ENCODE measurements at regions of chr7 and their contacts with region 1.

Region 1: DNA sequence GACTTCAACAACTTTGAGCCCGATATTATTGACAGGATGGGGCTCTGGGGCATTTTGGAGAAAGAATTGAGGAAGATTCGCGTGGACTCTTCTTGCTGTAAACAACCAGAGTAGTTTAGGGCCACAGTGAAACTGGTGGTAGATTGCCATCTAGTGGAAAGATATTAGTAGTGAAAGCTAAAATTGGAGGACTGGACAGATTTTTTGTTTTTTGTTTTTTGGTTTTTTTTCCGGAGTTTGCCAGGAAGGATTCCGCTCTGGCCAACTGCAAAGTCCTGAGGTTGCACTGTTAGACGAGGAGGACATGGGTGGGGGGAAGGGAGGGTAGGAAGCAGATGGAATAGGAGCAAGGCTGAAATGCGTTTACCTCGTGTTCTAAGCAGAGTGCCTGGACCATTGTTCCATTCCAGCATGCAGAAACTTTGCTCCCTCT is 11.7 kb downstream of the NOBOX start:
- DNase-seq: peak; percentile 46
- ATAC-seq: peak; percentile 92
- H3K4me3 ChIP-seq: no peak overlapping the region
- H3K27ac ChIP-seq: no peak overlapping the region
- H3K4me1 ChIP-seq: no peaks in the 10 kb centered on the region
- H3K27me3 ChIP-seq: peaks cover 0 to 5% of the 10 kb centered on the region in 2 experiments; a peak in 2 of 5 replicates
- CTCF ChIP-seq: peak; percentile 70
- EP300 ChIP-seq: no peak
- POLR2A ChIP-seq: no peak
- RAD21 ChIP-seq: peak; percentile 34; the same call in 1 of the 2 replicates

Region 2: GRCh38 chr7:143884969-143885559 is 506.8 kb before region 1 on chr7:
- CTCF ChIA-PET with region 1: no interaction called
- POLR2A ChIA-PET with region 1: no interaction called
- in situ Hi-C with region 1: loop called (anchors 25 kb)
- intact Hi-C with region 1: no loop called
- DNase-seq: no peak
- ATAC-seq: no peak
- H3K4me3 ChIP-seq: no peak overlapping the region
- H3K27ac ChIP-seq: no peak overlapping the region
- H3K4me1 ChIP-seq: peaks cover 19% of the 10 kb centered on the region
- H3K27me3 ChIP-seq: no peaks in the 10 kb centered on the region; a peak in 1 of 5 replicates
- CTCF ChIP-seq: no peak
- EP300 ChIP-seq: no peak
- POLR2A ChIP-seq: no peak
- RAD21 ChIP-seq: no peak

Region 3: GRCh38 chr7:144174613-144175012 is 217.2 kb before region 1 on chr7:
- CTCF ChIA-PET with region 1: interaction called, 15 read pairs
- POLR2A ChIA-PET with region 1: no interaction called
- in situ Hi-C with region 1: loop called (anchors 10 kb)
- intact Hi-C with region 1: no loop called
- DNase-seq: no peak
- ATAC-seq: no peak
- H3K4me3 ChIP-seq: no peak overlapping the region
- H3K27ac ChIP-seq: no peak overlapping the region
- H3K4me1 ChIP-seq: no peaks in the 10 kb centered on the region
- H3K27me3 ChIP-seq: no peaks in the 10 kb centered on the region
- CTCF ChIP-seq: no peak
- EP300 ChIP-seq: no peak
- POLR2A ChIP-seq: no peak
- RAD21 ChIP-seq: no peak

Region 4: GRCh38 chr7:144407266-144407931 is 15.6 kb after region 1 on chr7:
- CTCF ChIA-PET with region 1: no interaction called
- POLR2A ChIA-PET with region 1: no interaction called
- in situ Hi-C with region 1: no loop called
- intact Hi-C with region 1: no loop called
- DNase-seq: no peak
- ATAC-seq: no peak
- H3K4me3 ChIP-seq: no peak overlapping the region
- H3K27ac ChIP-seq: no peak overlapping the region
- H3K4me1 ChIP-seq: no peaks in the 10 kb centered on the region
- H3K27me3 ChIP-seq: peaks cover 0 to 10% of the 10 kb centered on the region in 2 experiments; a peak in 3 of 5 replicates
- CTCF ChIP-seq: no peak
- EP300 ChIP-seq: no peak
- POLR2A ChIP-seq: no peak
- RAD21 ChIP-seq: no peak

Measured in HepG2 (cell line).